ENCODE measurements at regions of chr10 and their contacts with region 1.

Region 1: GRCh38 chr10:101141616-101142532 is 10.8 kb downstream of the TLX1 start:
- DNase-seq: peak; percentile 88
- H3K4me3 Mint-ChIP-seq: no peak overlapping the region
- H3K27ac Mint-ChIP-seq: no peak overlapping the region
- H3K4me1 Mint-ChIP-seq: peaks cover 21% of the 10 kb centered on the region
- H3K27me3 Mint-ChIP-seq: peaks cover 89% of the 10 kb centered on the region

Region 2: GRCh38 chr10:101050208-101051069 is 91.4 kb before region 1 on chr10:
- CTCF ChIA-PET with region 1: interaction called, 34 read pairs
- intact Hi-C with region 1: no loop called
- DNase-seq: peak; percentile 81
- H3K4me3 Mint-ChIP-seq: no peak overlapping the region
- H3K27ac Mint-ChIP-seq: no peak overlapping the region
- H3K4me1 Mint-ChIP-seq: peaks cover 9% of the 10 kb centered on the region
- H3K27me3 Mint-ChIP-seq: peaks cover 48% of the 10 kb centered on the region

Region 3: DNA sequence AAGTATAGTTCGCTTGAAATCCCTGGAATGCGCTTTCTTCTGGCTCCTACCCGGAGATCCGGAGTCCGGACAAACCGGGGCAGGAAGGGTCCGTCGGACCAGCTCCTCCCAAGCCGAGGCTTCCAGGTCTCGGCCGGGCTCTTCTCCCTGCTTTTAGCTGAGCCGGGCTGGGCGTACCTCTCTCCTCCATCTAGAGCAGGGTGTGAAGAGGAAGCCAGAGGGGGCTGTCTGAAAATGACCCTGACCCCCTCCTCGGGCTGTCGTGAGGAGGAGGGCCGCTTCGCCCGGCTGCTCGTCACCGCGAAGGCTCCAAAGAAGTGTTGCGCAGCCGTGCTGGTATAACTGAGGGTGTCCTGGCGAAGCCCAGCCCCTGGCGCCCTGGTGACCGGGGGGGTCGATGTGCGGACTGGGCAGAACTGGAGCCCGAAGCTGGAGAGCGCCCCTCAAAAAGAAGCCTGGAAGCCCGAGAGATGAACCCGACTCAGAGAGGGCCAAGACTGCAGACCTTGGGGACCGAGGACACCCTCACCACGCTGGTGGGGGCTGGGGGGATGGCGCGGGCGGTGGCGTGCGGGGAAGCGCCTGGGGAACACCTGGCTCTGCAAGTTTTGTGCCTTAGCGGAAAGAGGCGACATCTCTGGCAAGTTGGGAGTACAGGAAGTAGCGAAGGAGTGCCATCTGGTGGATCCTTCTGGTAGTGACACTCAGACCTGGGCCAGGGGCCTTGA is 74.4 kb before region 1 on chr10:
- CTCF ChIA-PET with region 1: interaction called, 48 read pairs
- intact Hi-C with region 1: no loop called
- DNase-seq: peak; percentile 90
- H3K4me3 Mint-ChIP-seq: peak overlapping the region; percentile 66
- H3K27ac Mint-ChIP-seq: no peak overlapping the region
- H3K4me1 Mint-ChIP-seq: peaks cover 23% of the 10 kb centered on the region
- H3K27me3 Mint-ChIP-seq: peaks cover 40% of the 10 kb centered on the region

Region 4: GRCh38 chr10:101095542-101096213 is 46.2 kb before region 1 on chr10:
- CTCF ChIA-PET with region 1: interaction called, 364 read pairs
- intact Hi-C with region 1: loop called (anchors 1 kb)
- DNase-seq: peak; percentile 86
- H3K4me3 Mint-ChIP-seq: no peak overlapping the region
- H3K27ac Mint-ChIP-seq: no peak overlapping the region
- H3K4me1 Mint-ChIP-seq: no peaks in the 10 kb centered on the region
- H3K27me3 Mint-ChIP-seq: peaks cover 39% of the 10 kb centered on the region

Region 5: GRCh38 chr10:101114646-101115045 is 27.2 kb before region 1 on chr10:
- CTCF ChIA-PET with region 1: interaction called, 11 read pairs
- intact Hi-C with region 1: no loop called
- DNase-seq: no peak
- H3K4me3 Mint-ChIP-seq: no peak overlapping the region
- H3K27ac Mint-ChIP-seq: no peak overlapping the region
- H3K4me1 Mint-ChIP-seq: no peaks in the 10 kb centered on the region
- H3K27me3 Mint-ChIP-seq: peaks cover 28% of the 10 kb centered on the region

Region 6: GRCh38 chr10:101130984-101131961 is 10.6 kb before region 1 on chr10 and contains the start of gene TLX1:
- CTCF ChIA-PET with region 1: interaction called, 28 read pairs
- intact Hi-C with region 1: no loop called
- DNase-seq: no peak
- H3K4me3 Mint-ChIP-seq: no peak within 1 kb of the TSS
- H3K27ac Mint-ChIP-seq: no peak within 1 kb of the TSS
- H3K4me1 Mint-ChIP-seq: peaks cover 35% of the 10 kb centered on the region
- H3K27me3 Mint-ChIP-seq: peaks cover 83% of the 10 kb centered on the region
- total RNA-seq, gene TLX1: not detected

Region 7: GRCh38 chr10:101161494-101162299 is 19.8 kb after region 1 on chr10:
- CTCF ChIA-PET with region 1: interaction called, 10 read pairs
- intact Hi-C with region 1: no loop called
- DNase-seq: peak; percentile 87
- H3K4me3 Mint-ChIP-seq: peak overlapping the region; percentile 15
- H3K27ac Mint-ChIP-seq: no peak overlapping the region
- H3K4me1 Mint-ChIP-seq: peaks cover 13% of the 10 kb centered on the region
- H3K27me3 Mint-ChIP-seq: peaks cover 53% of the 10 kb centered on the region

Region 8: DNA sequence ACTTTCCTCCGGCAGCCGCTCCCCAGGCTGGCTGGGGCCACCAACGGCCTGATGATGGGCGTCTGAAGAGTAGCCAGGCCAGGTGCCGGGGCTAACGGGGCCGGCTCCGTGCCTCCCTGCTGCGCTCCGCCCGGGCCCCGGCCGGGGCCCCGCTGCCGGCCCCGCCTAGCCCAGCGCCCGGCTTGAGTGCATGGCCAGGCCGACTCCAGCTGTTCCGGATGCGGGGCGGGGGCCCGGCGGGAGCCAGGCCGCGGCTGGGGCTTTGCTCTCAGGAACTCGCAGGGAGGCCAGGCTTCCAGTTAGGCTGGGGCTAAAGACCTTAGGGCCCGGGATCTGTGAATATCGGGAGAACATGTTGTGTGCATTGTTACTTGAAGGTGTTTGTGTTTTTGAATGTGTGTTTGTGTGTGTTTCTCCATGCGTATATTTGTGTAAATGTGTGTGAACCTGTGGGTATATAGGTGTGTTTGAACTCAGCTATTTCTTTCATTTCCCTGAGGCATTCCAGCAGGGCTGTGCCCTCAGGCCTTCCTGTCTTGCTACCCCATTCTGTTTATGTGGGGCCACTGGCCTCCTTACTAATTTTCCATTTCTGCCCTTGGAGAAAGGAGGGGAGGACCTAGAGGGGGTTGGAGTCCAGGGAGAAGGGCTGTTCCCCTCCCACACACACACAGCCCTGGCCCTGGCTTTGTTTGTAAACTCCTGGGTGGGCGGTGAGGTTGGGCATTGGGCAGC is 88.5 kb after region 1 on chr10:
- CTCF ChIA-PET with region 1: no interaction called
- intact Hi-C with region 1: no loop called
- DNase-seq: no peak
- H3K4me3 Mint-ChIP-seq: no peak overlapping the region
- H3K27ac Mint-ChIP-seq: peak overlapping the region; percentile 43
- H3K4me1 Mint-ChIP-seq: peaks cover 27% of the 10 kb centered on the region
- H3K27me3 Mint-ChIP-seq: peaks cover 74% of the 10 kb centered on the region